ENCODE measurements at regions of chr4 and their contacts with region 1.

Region 1: GRCh38 chr4:128757712-128758111 is 51.8 kb upstream of the JADE1 start:
- DNase-seq: no peak
- ATAC-seq: no peak
- H3K4me3 ChIP-seq: no peak overlapping the region
- H3K27ac ChIP-seq: no peak overlapping the region
- H3K4me1 ChIP-seq: no peaks in the 10 kb centered on the region
- H3K27me3 ChIP-seq: no peaks in the 10 kb centered on the region
- CTCF ChIP-seq: no peak

Region 2: DNA sequence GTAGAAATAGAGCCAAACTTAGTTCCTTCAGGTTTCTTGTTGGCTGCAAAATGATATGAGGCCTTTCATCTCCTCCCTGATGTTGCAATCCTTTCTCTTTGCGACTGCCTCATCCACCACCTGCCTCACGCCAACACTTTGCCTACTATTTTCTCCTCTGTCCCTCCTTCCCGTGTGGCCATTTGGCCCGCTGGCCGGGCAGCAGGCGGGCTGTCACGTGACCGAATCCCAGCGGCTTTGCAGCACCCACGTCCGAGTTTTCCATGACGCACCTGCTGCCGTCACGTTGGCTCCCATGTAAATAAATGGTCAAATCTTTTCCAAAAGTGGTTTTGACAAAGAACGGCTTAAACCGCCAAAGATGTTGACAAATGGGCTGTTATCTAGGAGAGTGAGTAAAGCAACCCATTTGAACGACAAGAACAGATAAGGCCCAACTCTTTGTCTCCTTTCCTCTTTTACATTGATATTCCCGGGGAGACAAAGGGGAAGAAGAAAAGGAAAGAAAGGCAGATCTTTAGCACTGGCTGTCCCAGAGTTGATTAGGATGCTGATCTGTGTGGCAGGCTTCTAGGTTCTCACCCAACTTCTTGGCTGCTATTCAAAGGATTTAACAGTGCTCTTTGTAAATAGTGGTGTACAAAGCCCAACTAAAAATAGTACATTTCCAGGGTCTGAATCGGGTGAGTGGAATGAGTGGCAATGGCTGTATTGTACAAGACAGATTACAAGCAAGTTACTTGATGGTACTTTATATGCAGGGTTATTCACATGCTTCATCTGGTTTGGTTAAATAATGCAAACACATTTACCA is 122.4 kb before region 1 on chr4:
- CTCF ChIA-PET with region 1: no interaction called
- POLR2A ChIA-PET with region 1: no interaction called
- in situ Hi-C with region 1: no loop called
- intact Hi-C with region 1: no loop called
- DNase-seq: no peak
- ATAC-seq: no peak
- H3K4me3 ChIP-seq: no peak overlapping the region
- H3K27ac ChIP-seq: no peak overlapping the region
- H3K4me1 ChIP-seq: no peaks in the 10 kb centered on the region
- H3K27me3 ChIP-seq: no peaks in the 10 kb centered on the region
- CTCF ChIP-seq: no peak

Region 3: GRCh38 chr4:128707864-128708263 is 49.8 kb before region 1 on chr4:
- CTCF ChIA-PET with region 1: no interaction called
- POLR2A ChIA-PET with region 1: no interaction called
- in situ Hi-C with region 1: no loop called
- intact Hi-C with region 1: no loop called
- DNase-seq: no peak
- ATAC-seq: no peak
- H3K4me3 ChIP-seq: no peak overlapping the region
- H3K27ac ChIP-seq: no peak overlapping the region
- H3K4me1 ChIP-seq: no peaks in the 10 kb centered on the region
- H3K27me3 ChIP-seq: no peaks in the 10 kb centered on the region
- CTCF ChIP-seq: no peak

Region 4: GRCh38 chr4:128737098-128737513 is 20.6 kb before region 1 on chr4:
- CTCF ChIA-PET with region 1: interaction called, 10 read pairs
- POLR2A ChIA-PET with region 1: no interaction called
- in situ Hi-C with region 1: no loop called
- intact Hi-C with region 1: no loop called
- DNase-seq: no peak
- ATAC-seq: no peak
- H3K4me3 ChIP-seq: no peak overlapping the region
- H3K27ac ChIP-seq: no peak overlapping the region
- H3K4me1 ChIP-seq: no peaks in the 10 kb centered on the region
- H3K27me3 ChIP-seq: no peaks in the 10 kb centered on the region
- CTCF ChIP-seq: no peak

Region 5: DNA sequence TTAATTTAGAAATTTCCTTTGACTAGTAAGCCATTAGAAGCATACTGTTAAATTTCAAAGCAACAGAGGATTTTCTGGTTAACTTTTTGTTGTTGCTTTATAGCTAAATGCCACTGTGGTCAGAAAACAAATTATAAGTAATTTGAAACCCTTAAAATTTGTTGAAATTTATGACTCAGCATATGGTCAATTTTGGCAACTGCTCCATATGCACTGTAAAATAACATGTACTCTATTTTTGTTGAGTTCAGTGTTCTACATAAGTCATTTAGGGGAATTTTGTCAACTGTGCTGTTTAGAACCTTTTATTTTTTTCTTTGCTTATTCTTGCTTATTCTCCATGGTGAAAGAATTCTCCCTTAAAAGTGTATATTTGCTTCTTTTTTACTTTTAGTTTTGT is 307.0 kb after region 1 on chr4:
- CTCF ChIA-PET with region 1: no interaction called
- POLR2A ChIA-PET with region 1: no interaction called
- in situ Hi-C with region 1: no loop called
- intact Hi-C with region 1: no loop called
- DNase-seq: no peak
- ATAC-seq: no peak
- H3K4me3 ChIP-seq: no peak overlapping the region
- H3K27ac ChIP-seq: no peak overlapping the region
- H3K4me1 ChIP-seq: no peaks in the 10 kb centered on the region
- H3K27me3 ChIP-seq: no peaks in the 10 kb centered on the region
- CTCF ChIP-seq: no peak

Region 6: DNA sequence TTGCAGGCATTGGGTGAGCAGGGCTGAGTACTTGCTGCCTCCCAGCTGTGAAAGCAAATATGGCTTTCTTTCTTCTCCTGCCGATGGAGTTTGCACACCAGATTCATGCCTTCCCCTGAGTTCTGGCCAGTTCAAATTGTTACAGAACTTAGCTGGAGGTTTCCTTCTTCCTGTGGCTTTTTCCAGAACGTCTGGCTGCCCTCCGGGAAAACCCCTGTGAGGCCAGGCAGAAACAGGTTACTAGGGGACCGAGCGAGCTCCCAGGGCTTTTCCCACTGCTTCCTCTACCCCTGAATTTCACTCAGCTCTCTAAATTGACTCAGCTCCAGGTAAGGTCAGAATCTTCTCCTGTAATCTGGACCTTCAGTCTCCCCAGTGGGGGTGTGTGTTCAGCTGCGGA is 820.6 kb after region 1 on chr4:
- CTCF ChIA-PET with region 1: no interaction called
- POLR2A ChIA-PET with region 1: no interaction called
- in situ Hi-C with region 1: no loop called
- intact Hi-C with region 1: no loop called
- DNase-seq: no peak
- ATAC-seq: no peak
- H3K4me3 ChIP-seq: no peak overlapping the region
- H3K27ac ChIP-seq: no peak overlapping the region
- H3K4me1 ChIP-seq: no peaks in the 10 kb centered on the region
- H3K27me3 ChIP-seq: no peaks in the 10 kb centered on the region
- CTCF ChIP-seq: no peak